Sciatic nerve (tissue), 2 donors: ENCODE measurements at regions of chr6 and their contacts with region 1.

Region 1: GRCh38 chr6:152218880-152219279 is 411.4 kb downstream of the ESR1 start:
- DNase-seq: no peak
- ATAC-seq: no peak

Region 2: DNA sequence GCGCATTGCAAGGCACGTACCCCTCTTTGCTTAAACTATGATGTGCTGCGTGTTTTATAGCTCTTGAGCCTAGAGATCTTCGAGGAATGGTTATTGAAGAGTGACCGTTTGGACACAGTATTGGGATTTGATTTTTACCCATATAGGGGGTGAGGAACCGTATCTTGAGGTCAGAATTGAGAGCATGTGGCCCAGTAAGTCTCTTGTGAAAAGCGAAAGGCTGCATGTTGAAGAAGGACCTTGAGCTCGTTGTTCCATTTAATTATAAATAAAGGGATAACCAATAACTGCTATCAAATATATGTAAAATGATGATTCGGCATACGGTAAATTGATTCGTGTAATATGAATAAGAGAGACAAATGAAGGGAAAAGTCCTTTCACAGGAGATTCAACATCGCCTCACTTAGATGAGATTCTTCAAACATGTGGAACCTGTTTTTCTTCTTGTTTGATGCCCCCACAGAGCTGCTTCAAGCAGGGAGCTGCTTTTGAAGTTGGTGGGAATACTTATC is 912.6 kb before region 1 on chr6:
- intact Hi-C with region 1: loop called (anchors 5 kb)
- DNase-seq: no peak
- ATAC-seq: no peak